K562 (cell line): ENCODE measurements at regions of chr2 and their contacts with region 1.

Region 1: GRCh38 chr2:235746257-235747084 is 252.6 kb downstream of the AGAP1 start:
- DNase-seq: peak; percentile 57 to 70 (median 64)
- ATAC-seq: peak; percentile 98
- H3K4me3 ChIP-seq: no peak overlapping the region
- H3K27ac ChIP-seq: no peak overlapping the region
- H3K4me1 ChIP-seq: peaks cover 0 to 4% of the 10 kb centered on the region in 2 experiments; a peak in 1 of 5 replicates
- H3K27me3 ChIP-seq: no peaks in the 10 kb centered on the region
- CTCF ChIP-seq: peak; percentile 61 to 83 (median 70)
- EP300 ChIP-seq: no peak
- POLR2A ChIP-seq: no peak
- RAD21 ChIP-seq: peak; percentile 47 to 72

Region 2: DNA sequence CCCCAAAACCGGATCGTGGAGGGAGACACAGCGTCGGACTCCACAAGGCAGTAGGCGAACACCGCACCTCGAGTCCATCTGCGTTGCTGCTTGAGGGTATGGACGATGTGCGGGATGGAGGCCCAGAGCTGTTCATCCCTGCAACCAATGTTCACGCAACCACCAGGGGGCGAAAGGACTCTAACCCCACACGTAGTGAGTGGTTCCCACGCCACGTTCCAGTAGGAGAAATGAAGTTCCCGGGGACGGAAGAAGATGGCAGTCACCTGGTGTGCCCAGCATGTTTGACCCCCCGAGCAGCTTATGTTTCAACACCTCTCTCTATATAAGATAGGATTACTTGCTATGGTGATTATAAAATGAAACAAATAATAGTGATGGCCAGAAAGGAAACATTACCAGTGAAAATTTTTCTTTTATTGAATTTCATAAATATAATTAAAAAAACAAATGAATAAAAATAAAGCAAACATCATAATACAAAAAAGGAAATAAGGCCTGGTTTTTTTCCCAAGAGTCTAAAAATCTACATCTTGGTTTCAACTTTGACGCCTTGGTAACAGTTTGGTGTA is 610.4 kb before region 1 on chr2:
- CTCF ChIA-PET with region 1: interaction called, 3 read pairs
- POLR2A ChIA-PET with region 1: interaction called, 3 read pairs
- in situ Hi-C with region 1: loop called (anchors 5 kb)
- intact Hi-C with region 1: loop called (anchors 1 kb)
- DNase-seq: peak; percentile 57 to 65 (median 60)
- ATAC-seq: peak; percentile 89
- H3K4me3 ChIP-seq: no peak overlapping the region
- H3K27ac ChIP-seq: no peak overlapping the region
- H3K4me1 ChIP-seq: no peaks in the 10 kb centered on the region
- H3K27me3 ChIP-seq: peaks cover 0 to 14% of the 10 kb centered on the region in 2 experiments; a peak in 2 of 5 replicates
- CTCF ChIP-seq: peak; percentile 62 to 67 (median 63)
- EP300 ChIP-seq: no peak
- POLR2A ChIP-seq: no peak
- RAD21 ChIP-seq: peak; percentile 32 to 59; a peak in 2 of 4 replicates

Region 3: DNA sequence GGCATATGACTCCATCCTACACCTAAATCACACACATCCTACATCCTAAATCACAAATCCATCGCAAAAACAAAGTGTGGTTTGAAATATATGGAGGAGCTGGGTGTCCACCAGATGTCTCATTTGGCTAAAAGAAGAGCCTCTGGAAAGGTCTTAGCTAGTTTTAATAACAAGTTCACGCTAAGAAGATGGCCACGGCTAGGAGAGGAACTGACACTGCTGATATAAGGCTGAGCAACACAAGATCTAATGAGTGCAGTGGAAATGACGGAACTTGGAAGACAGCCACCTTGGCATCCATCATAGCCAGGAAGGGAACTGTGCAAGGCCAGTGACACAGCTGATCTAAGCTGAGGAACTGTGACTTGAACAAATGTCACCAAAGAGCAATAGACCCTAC is 312.6 kb before region 1 on chr2:
- CTCF ChIA-PET with region 1: no interaction called
- POLR2A ChIA-PET with region 1: no interaction called
- in situ Hi-C with region 1: no loop called
- intact Hi-C with region 1: loop called (anchors 5 kb)
- DNase-seq: peak in 2 of 4 experiments; percentile 41 to 52
- ATAC-seq: peak; percentile 96
- H3K4me3 ChIP-seq: no peak overlapping the region
- H3K27ac ChIP-seq: peak overlapping the region; percentile 32; the same call in 1 of the 3 replicates
- H3K4me1 ChIP-seq: peaks cover 0 to 8% of the 10 kb centered on the region in 2 experiments; a peak in 3 of 5 replicates
- H3K27me3 ChIP-seq: no peaks in the 10 kb centered on the region
- CTCF ChIP-seq: peak; percentile 39 to 75 (median 48); a peak in 5 of 6 replicates
- EP300 ChIP-seq: peak; percentile 44; the same call in 1 of the 2 replicates
- POLR2A ChIP-seq: no peak
- RAD21 ChIP-seq: peak; percentile 82 to 88

Region 4: DNA sequence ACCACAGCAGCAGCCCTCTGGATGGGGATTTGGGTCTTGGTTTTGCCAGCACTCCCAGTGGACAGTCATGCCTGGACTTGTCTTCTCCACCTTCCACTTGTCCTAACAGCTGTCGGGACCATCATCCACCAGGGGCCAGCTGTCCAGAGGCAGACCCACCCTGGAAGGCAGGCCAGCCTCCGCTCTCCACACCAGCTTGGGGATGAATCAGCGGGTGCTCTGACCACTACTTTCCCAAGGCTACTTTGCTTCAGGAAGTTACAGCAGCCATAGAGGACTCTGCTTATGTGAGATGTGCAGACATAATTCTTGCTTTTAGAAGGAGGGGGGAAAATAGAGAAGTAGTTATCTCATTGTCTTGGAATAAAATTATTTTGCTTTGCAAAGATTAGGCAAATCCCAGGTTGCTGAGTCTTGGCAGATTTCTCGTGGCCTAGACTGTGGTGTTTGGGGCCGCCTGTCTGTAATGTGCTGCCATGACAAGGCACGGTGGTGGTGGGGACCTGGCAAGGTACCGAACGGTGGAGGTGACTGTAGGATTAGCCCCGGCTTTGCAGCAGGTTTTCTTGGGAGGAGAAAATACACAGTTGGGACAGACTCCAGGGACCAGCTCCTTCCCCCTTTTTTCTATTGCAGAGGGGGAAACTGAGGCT is 103.9 kb before region 1 on chr2:
- CTCF ChIA-PET with region 1: no interaction called
- POLR2A ChIA-PET with region 1: no interaction called
- in situ Hi-C with region 1: no loop called
- intact Hi-C with region 1: loop called (anchors 5 kb)
- DNase-seq: peak in 1 of 4 experiments; percentile 9
- ATAC-seq: peak; percentile 31; the same call in 2 of the 3 replicates
- H3K4me3 ChIP-seq: no peak overlapping the region
- H3K27ac ChIP-seq: no peak overlapping the region
- H3K4me1 ChIP-seq: peaks cover 12 to 38% of the 10 kb centered on the region in 2 experiments; a peak in 4 of 5 replicates
- H3K27me3 ChIP-seq: no peaks in the 10 kb centered on the region
- CTCF ChIP-seq: peak in 2 of 3 experiments; percentile 9 to 18; a peak in 1 of 6 replicates
- EP300 ChIP-seq: no peak
- POLR2A ChIP-seq: no peak
- RAD21 ChIP-seq: 0 out of 4 replicates have a peak, but pooled peaks of 1 of the 2 experiments have one; percentile 3

Region 5: GRCh38 chr2:235921508-235922191 is 175.2 kb after region 1 on chr2:
- CTCF ChIA-PET with region 1: no interaction called
- POLR2A ChIA-PET with region 1: no interaction called
- in situ Hi-C with region 1: no loop called
- intact Hi-C with region 1: no loop called
- DNase-seq: no peak
- ATAC-seq: no peak
- H3K4me3 ChIP-seq: no peak overlapping the region
- H3K27ac ChIP-seq: no peak overlapping the region
- H3K4me1 ChIP-seq: no peaks in the 10 kb centered on the region
- H3K27me3 ChIP-seq: no peaks in the 10 kb centered on the region
- CTCF ChIP-seq: no peak
- EP300 ChIP-seq: no peak
- POLR2A ChIP-seq: no peak
- RAD21 ChIP-seq: no peak